ENCODE measurements at regions of chr19 and their contacts with region 1.

Region 1: GRCh38 chr19:19663256-19664038 is at the start of gene ATP13A1:
- DNase-seq: peak; percentile 93
- H3K4me3 Mint-ChIP-seq: peak within 1 kb of the TSS; percentile 91
- H3K27ac Mint-ChIP-seq: peak within 1 kb of the TSS; percentile 98
- H3K4me1 Mint-ChIP-seq: peaks cover 28% of the 10 kb centered on the region
- H3K27me3 Mint-ChIP-seq: no peaks in the 10 kb centered on the region
- total RNA-seq, gene ATP13A1: 101 and 104 TPM in 2 replicates

Region 2: DNA sequence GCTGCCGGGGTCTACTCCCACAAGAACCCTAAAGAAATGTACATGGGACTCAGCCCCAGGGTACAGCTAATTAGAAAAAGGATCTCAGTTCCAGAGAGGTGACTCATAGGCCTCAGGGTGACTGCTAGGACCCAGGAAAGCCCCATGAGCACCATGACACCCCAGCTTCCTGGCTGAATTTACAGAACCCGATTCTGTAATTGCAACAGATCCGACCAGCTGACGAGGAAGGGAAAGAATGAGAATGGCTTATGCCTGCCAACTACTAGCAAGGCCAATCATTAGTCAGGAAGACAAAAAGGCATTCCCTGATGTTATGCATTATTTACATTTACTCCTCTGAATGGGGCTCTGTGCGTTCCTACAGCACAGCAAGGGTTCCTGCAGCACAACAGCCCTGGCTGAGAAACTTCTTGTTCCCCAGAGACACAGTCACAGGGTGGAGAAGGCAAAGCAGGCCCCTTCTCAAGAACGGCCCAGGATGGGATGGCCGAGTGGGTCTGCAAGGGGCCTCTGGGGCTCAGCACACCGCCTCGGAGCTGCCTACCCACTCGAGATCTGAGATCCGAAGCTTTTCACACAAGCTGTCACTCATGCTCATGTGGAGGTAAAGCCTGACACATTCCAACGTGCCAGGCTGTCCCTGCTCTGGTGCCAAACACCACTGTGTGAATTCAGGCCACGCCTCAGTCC is 72.2 kb before region 1 on chr19:
- intact Hi-C with region 1: loop called (anchors 2 kb)
- DNase-seq: peak; percentile 75
- H3K4me3 Mint-ChIP-seq: peak overlapping the region; percentile 74
- H3K27ac Mint-ChIP-seq: peak overlapping the region; percentile 97
- H3K4me1 Mint-ChIP-seq: peaks cover 77% of the 10 kb centered on the region
- H3K27me3 Mint-ChIP-seq: no peaks in the 10 kb centered on the region

Region 3: GRCh38 chr19:19643158-19644053 is 20.0 kb before region 1 on chr19 and contains the start of gene GMIP:
- intact Hi-C with region 1: loop called (anchors 1 kb)
- DNase-seq: peak; percentile 82
- H3K4me3 Mint-ChIP-seq: peak within 1 kb of the TSS; percentile 95
- H3K27ac Mint-ChIP-seq: peak within 1 kb of the TSS; percentile 93
- H3K4me1 Mint-ChIP-seq: peaks cover 18% of the 10 kb centered on the region
- H3K27me3 Mint-ChIP-seq: no peaks in the 10 kb centered on the region
- total RNA-seq, gene GMIP: 67.8 and 71.6 TPM in 2 replicates

Region 4: DNA sequence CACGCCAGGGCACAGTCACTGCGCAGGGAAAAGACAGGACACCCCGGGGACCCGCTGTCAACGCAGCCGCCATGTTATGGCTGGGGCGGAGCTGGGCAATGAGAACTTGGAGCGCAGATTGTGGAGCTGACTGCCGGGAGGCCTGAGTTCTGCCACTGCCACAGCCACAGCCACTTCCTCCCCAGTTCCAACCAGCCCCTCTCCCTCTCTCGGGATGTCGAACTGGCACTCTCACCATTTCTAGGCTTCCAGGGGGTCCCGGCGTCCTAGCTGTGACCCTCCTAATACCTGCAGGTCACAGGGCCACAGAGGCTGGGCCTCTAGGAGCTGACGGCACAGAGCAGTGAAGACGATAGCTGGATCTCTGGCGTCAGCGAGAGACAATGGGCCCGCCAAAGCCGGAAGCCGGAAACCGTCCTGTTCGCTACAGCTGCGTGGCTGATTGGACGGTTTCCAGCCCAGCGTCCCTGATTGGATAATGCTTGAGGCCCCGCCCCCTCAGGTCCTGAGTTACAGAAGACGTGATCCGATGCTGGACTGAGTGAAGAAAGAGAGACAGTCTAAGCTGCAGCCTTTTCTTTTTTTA is 158.0 kb after region 1 on chr19 and contains the start of gene ZNF506:
- intact Hi-C with region 1: loop called (anchors 1 kb)
- DNase-seq: peak; percentile 88
- H3K4me3 Mint-ChIP-seq: peak within 1 kb of the TSS; percentile 98
- H3K27ac Mint-ChIP-seq: peak within 1 kb of the TSS; percentile 97
- H3K4me1 Mint-ChIP-seq: peaks cover 10% of the 10 kb centered on the region
- H3K27me3 Mint-ChIP-seq: no peaks in the 10 kb centered on the region
- total RNA-seq, gene ZNF506: 13.5 and 15.7 TPM in 2 replicates

Region 5: DNA sequence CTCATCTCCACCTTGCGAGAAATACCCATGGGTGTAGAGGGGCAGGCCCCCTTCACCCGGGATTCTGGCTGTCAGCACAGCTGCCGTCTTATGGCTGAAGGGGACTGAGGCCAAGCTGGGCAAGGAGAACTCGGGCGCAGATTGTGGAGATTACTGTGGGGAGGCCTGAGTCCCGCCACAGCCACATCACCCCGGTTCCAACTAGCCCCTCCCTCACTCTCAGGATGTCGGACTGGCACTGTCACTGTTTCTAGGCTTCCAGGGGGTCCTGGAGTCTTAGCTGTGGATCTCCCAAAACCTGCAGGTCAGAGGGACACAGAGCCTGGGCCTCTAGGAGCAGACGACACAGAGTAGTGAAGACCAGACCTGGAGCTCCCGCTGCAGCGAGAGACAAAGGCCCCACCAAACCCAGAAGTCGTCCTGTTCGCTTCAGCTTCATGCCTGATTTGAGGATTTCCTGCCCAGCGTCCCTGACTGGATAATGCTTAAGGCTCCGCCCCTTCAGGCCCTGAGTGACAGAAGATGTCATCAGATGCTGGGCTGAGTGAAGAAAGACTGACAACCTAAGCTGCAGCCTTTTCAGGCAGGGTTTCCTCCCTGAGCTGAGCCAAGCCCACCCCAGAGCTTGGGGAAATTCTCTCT is 293.1 kb after region 1 on chr19:
- intact Hi-C with region 1: loop called (anchors 1 kb)
- DNase-seq: no peak
- H3K4me3 Mint-ChIP-seq: no peak overlapping the region
- H3K27ac Mint-ChIP-seq: no peak overlapping the region
- H3K4me1 Mint-ChIP-seq: no peaks in the 10 kb centered on the region
- H3K27me3 Mint-ChIP-seq: no peaks in the 10 kb centered on the region

Region 6: GRCh38 chr19:21020298-21021227 is 1357.1 kb after region 1 on chr19 and contains the start of gene ZNF430:
- intact Hi-C with region 1: loop called (anchors 5 kb)
- DNase-seq: peak; percentile 93
- H3K4me3 Mint-ChIP-seq: peak within 1 kb of the TSS; percentile 99
- H3K27ac Mint-ChIP-seq: peak within 1 kb of the TSS; percentile 98
- H3K4me1 Mint-ChIP-seq: peaks cover 26% of the 10 kb centered on the region
- H3K27me3 Mint-ChIP-seq: peaks cover 2% of the 10 kb centered on the region
- total RNA-seq, gene ZNF430: 20.3 and 21.5 TPM in 2 replicates

Measured in activated T-helper 1 cell treated with anti-CD3 and anti-CD28 coated beads, Interleukin-12 subunit alpha, Interleukin-12 subunit beta, Interleukin-2, Interleukin-4 antibody, amounts not matched to agents 30 ng/mL and 10 ng/mL and 1 ng/mL, durations not matched to agents 14 hours and 24 hours and 36 hours (primary cell).